ENCODE measurements at regions of chr19 and their contacts with region 1.

Region 1: DNA sequence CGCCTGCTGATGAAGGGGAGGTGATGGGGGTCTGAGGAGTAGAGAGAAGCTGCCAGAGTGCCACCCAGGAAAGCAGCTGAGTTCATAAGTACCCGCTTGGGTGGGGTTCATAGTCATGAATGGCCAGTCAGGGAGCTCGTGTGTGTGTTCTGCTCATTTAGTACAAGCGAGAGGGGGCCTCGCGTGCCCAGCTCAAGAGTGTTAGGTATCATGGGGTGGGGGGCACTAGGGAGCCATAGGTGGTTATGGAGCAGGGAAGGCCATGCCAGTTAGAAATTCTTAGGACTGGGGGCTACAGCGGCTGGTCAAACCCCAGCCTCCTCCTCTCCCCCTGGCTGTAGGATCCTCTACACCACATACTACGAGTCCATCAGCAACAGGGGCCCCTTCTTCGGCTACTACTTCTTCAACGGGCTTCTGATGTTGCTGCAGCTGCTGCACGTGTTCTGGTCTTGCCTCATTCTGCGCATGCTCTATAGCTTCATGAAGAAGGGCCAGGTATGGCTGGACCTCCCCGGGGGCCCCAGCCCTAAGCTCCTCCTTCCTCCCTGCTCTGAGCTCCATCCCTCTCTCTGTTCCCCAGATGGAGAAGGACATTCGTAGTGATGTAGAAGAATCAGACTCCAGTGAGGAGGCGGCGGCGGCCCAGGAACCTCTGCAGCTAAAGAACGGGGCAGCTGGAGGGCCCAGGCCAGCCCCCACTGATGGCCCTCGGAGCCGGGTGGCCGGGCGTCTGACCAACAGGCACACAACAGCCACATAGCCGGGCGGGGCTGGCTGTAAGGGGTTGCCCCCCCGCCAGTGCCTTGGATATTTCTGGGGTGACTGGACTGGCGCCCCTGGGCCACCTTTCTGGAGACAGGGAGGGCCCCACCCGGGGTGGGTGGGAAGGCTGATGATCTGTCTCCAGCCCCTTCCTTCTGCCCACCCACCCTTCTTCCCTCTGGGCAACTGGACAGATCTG is 46.5 kb downstream of the CD320 start:
- DNase-seq: peak in 1 of 2 donors; percentile 23
- H3K4me3 ChIP-seq: no peak overlapping the region
- H3K27ac ChIP-seq: no peak overlapping the region
- H3K4me1 ChIP-seq: peaks cover 0 to 7% (median 0%) of the 10 kb centered on the region in 4 donors
- H3K27me3 ChIP-seq: no peaks in the 10 kb centered on the region
- CTCF ChIP-seq: no peak
- EP300 ChIP-seq: no peak
- POLR2A ChIP-seq: no peak

Region 2: GRCh38 chr19:8319844-8320520 is 58.4 kb after region 1 on chr19:
- intact Hi-C with region 1: loop called (anchors 5 kb)
- DNase-seq: no peak
- H3K4me3 ChIP-seq: peak overlapping the region; percentile 79 to 94 (median 84)
- H3K27ac ChIP-seq: peak overlapping the region in 4 of 5 donors; percentile 92 to 97 (median 93)
- H3K4me1 ChIP-seq: peaks cover 20 to 71% (median 37%) of the 10 kb centered on the region in 4 donors
- H3K27me3 ChIP-seq: no peaks in the 10 kb centered on the region
- CTCF ChIP-seq: no peak
- EP300 ChIP-seq: no peak
- POLR2A ChIP-seq: no peak

Region 3: GRCh38 chr19:8451885-8452284 is 190.3 kb after region 1 on chr19:
- intact Hi-C with region 1: no loop called
- DNase-seq: peak in 1 of 2 donors; percentile 41
- H3K4me3 ChIP-seq: no peak overlapping the region
- H3K27ac ChIP-seq: peak overlapping the region in 3 of 5 donors; percentile 5 to 38 (median 33)
- H3K4me1 ChIP-seq: peaks cover 73 to 93% (median 84%) of the 10 kb centered on the region in 4 donors
- H3K27me3 ChIP-seq: no peaks in the 10 kb centered on the region
- CTCF ChIP-seq: no peak
- EP300 ChIP-seq: no peak
- POLR2A ChIP-seq: no peak